CD14-positive monocyte (primary cell): ENCODE measurements at regions of chr1 and their contacts with region 1.

Region 1: GRCh38 chr1:61453111-61453961 is 271.6 kb downstream of the TM2D1 start:
- DNase-seq: peak; percentile 88 to 94 (median 90)
- H3K4me3 ChIP-seq: no peak overlapping the region
- H3K4me3 Mint-ChIP-seq: peak overlapping the region; percentile 21 to 33
- H3K27ac ChIP-seq: peak overlapping the region; percentile 5 to 82
- H3K27ac Mint-ChIP-seq: peak overlapping the region; percentile 61 to 94 (median 90)
- H3K4me1 ChIP-seq: peaks cover 29 to 49% of the 10 kb centered on the region in 2 donors
- H3K4me1 Mint-ChIP-seq: peaks cover 46% of the 10 kb centered on the region
- H3K27me3 ChIP-seq: no peaks in the 10 kb centered on the region
- H3K27me3 Mint-ChIP-seq: no peaks in the 10 kb centered on the region
- CTCF ChIP-seq: peak; percentile 77

Region 2: DNA sequence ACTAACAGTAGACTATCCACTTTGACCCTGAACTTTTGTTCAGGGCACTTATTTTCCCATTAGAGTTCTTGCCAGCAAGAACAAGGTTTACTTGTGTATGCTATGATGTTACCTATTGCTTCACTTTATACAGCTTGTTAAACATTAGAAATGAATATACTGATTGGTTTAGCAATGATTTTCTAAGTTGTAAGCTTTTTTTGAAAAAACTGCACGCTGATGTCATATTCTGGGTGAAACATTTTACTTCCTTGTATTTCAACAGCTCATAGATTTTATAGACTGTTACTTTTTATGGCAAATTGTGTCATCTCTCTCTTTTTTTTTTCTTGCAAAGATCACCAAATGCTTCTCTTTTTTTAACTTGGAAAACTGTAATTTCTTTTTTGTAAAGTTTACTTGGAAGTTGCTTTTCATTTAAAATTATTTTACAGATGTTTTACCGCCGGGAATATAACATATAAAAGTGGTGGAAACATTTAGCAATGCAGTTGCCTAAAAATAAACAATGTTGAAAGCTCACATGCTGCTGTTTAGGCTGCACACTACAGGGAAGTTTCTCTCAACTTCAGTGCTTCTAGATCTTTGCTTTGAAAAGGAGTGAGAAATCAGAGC is 586.3 kb before region 1 on chr1:
- intact Hi-C with region 1: loop called in 1 of 2 experiments (anchors 10 kb)
- DNase-seq: peak; percentile 50 to 60 (median 55)
- H3K4me3 ChIP-seq: peak overlapping the region in 2 of 3 experiments; percentile 27 to 46
- H3K4me3 Mint-ChIP-seq: no peak overlapping the region
- H3K27ac ChIP-seq: peak overlapping the region in 1 of 2 donors; percentile 63
- H3K27ac Mint-ChIP-seq: no peak overlapping the region
- H3K4me1 ChIP-seq: peaks cover 21 to 26% of the 10 kb centered on the region in 2 donors
- H3K4me1 Mint-ChIP-seq: peaks cover 4% of the 10 kb centered on the region
- H3K27me3 ChIP-seq: no peaks in the 10 kb centered on the region
- H3K27me3 Mint-ChIP-seq: peaks cover 0 to 2% (median 2%) of the 10 kb centered on the region in 3 donors
- CTCF ChIP-seq: no peak

Region 3: DNA sequence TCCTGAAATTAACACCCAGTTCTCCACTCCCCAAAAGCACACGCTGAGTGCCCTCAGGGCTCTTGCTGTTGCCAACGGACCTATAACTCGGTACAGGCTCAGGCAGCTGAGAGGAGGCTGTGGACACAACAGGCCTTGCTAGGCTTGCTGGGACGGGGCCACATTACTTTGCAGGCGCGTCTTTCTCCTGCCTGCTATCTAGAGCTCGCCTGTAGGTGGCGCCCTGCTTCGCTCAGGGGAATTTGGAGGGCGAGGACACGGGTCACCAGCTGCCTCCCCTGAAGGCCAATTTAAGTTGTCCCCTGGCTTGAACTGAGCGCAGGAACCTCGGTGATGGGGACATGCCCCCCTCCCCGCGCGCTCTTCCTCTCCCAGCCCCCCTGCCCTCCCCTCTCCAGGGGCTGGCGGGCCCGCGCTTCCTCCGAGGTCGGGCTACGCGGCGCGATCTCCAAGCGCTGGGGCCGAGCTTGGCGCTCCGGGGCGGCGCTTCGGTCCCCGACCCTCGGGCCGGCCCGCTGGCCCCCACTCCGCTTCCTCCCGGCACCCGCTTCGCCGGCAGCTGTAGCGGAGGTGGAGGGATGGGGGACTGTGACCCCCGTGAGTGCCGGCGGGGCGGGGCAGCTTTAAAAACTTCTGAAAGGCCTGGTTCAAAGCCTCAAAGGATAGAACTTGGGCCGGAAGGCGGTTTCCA is 403.3 kb before region 1 on chr1:
- intact Hi-C with region 1: loop called (anchors 5 kb)
- DNase-seq: peak; percentile 80 to 82 (median 82)
- H3K4me3 ChIP-seq: peak overlapping the region; percentile 69 to 95 (median 73)
- H3K4me3 Mint-ChIP-seq: peak overlapping the region; percentile 81 to 84
- H3K27ac ChIP-seq: no peak overlapping the region
- H3K27ac Mint-ChIP-seq: no peak overlapping the region
- H3K4me1 ChIP-seq: peaks cover 23 to 46% of the 10 kb centered on the region in 2 donors
- H3K4me1 Mint-ChIP-seq: peaks cover 40% of the 10 kb centered on the region
- H3K27me3 ChIP-seq: peaks cover 37 to 43% of the 10 kb centered on the region in 2 donors
- H3K27me3 Mint-ChIP-seq: peaks cover 38 to 46% (median 40%) of the 10 kb centered on the region in 3 donors
- CTCF ChIP-seq: peak; percentile 93

Region 4: GRCh38 chr1:61641578-61642336 is 188.4 kb after region 1 on chr1:
- intact Hi-C with region 1: loop called in 1 of 2 experiments (anchors 10 kb)
- DNase-seq: peak; percentile 52 to 65 (median 61)
- H3K4me3 ChIP-seq: peak overlapping the region; percentile 49 to 88 (median 78)
- H3K4me3 Mint-ChIP-seq: peak overlapping the region; percentile 89
- H3K27ac ChIP-seq: peak overlapping the region in 1 of 2 donors; percentile 91
- H3K27ac Mint-ChIP-seq: peak overlapping the region; percentile 83 to 99 (median 97)
- H3K4me1 ChIP-seq: peaks cover 9 to 32% of the 10 kb centered on the region in 2 donors
- H3K4me1 Mint-ChIP-seq: peaks cover 36% of the 10 kb centered on the region
- H3K27me3 ChIP-seq: no peaks in the 10 kb centered on the region
- H3K27me3 Mint-ChIP-seq: peaks cover 0 to 3% (median 2%) of the 10 kb centered on the region in 3 donors
- CTCF ChIP-seq: peak; percentile 87